ENCODE measurements at regions of chr10 and their contacts with region 1.

Region 1: GRCh38 chr10:92450896-92451295 is 123.0 kb downstream of the IDE start:
- DNase-seq: no peak
- H3K4me3 ChIP-seq: no peak overlapping the region
- H3K27ac ChIP-seq: no peak overlapping the region
- H3K4me1 ChIP-seq: no peaks in the 10 kb centered on the region
- H3K27me3 ChIP-seq: no peaks in the 10 kb centered on the region
- CTCF ChIP-seq: no peak
- POLR2A ChIP-seq: no peak

Region 2: DNA sequence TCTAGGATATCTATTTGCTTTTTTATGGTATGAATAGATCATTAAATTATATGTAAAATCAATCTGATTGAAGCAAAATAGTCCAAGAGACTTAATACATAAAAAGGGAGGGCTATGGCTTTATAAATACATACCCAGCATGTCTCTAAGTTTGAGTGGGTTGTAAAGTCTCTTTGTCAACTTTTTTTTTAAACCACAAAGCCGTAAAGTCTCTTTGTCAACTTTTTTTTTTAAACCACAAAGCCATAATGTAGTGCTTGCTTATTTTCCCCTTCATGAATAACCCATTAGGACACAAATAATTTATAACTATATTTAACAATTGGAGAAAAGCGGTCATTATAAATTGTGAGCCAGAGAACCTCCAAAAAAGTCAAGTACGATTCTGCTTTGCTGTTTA is 1035.1 kb before region 1 on chr10:
- intact Hi-C with region 1: loop called (anchors 5 kb)
- DNase-seq: no peak
- H3K4me3 ChIP-seq: no peak overlapping the region
- H3K27ac ChIP-seq: no peak overlapping the region
- H3K4me1 ChIP-seq: peaks cover 0 to 4% of the 10 kb centered on the region in 2 donors
- H3K27me3 ChIP-seq: no peaks in the 10 kb centered on the region
- CTCF ChIP-seq: no peak
- POLR2A ChIP-seq: no peak

Region 3: GRCh38 chr10:91541481-91541880 is 909.4 kb before region 1 on chr10:
- intact Hi-C with region 1: no loop called
- DNase-seq: no peak
- H3K4me3 ChIP-seq: no peak overlapping the region
- H3K27ac ChIP-seq: no peak overlapping the region
- H3K4me1 ChIP-seq: no peaks in the 10 kb centered on the region
- H3K27me3 ChIP-seq: no peaks in the 10 kb centered on the region
- CTCF ChIP-seq: no peak
- POLR2A ChIP-seq: no peak

Region 4: GRCh38 chr10:92087750-92088395 is 363.0 kb before region 1 on chr10:
- intact Hi-C with region 1: no loop called
- DNase-seq: peak; percentile 58 to 62
- H3K4me3 ChIP-seq: no peak overlapping the region
- H3K27ac ChIP-seq: peak overlapping the region in 1 of 2 donors; percentile 21
- H3K4me1 ChIP-seq: no peaks in the 10 kb centered on the region
- H3K27me3 ChIP-seq: no peaks in the 10 kb centered on the region
- CTCF ChIP-seq: peak; percentile 84 to 96 (median 95)
- POLR2A ChIP-seq: no peak

Measured in breast epithelium (tissue), 4 donors.